AG04449 (cell line): ENCODE measurements at regions of chr6 and their contacts with region 1.

Region 1: DNA sequence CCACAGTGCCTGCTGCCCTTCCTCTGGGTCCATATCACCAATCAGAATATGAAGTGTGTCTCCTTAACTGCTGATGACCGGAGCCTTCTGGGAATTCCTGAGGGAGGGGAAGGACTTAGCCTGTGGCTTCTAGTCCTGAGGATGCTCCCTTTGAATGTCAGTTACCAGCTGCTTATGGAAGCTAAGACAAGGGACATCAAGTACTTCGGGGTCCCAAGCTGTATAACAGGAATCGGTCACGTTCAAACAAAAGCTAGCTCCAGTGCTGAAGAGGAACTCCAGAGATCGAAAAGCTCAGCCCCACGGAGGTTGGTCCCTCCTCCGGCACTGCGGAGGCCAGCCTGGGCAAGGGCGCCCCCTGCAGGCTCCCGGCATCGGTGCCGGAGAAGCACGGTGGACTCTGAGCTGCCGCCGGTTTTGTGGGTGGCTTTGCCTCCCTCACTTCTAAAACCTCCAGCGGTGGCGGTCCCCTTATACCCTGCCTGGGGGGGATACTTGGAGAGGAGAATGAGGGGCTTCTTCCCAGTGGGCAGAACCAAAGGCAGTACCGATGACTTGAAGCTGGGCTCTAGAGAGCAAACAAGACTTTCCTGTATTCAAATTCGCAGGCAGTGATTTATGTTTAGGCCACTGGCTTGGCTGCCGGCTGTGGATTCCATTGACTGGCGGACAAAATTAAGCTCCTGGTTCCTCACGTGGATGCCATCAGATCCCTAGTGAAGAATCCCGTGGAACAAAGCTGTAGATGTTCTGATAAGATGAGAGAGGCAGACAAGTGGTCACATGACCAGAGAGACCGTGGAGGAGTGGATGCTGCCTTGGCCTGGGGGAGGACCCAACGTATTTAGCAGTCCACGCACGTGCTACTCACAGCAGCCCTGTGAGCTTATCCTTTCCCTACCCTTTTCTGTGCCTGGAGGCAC is 16.2 kb upstream of the UBR2 start:
- DNase-seq: no peak
- H3K4me3 ChIP-seq: peak overlapping the region; percentile 55
- CTCF ChIP-seq: peak; percentile 100

Region 2: DNA sequence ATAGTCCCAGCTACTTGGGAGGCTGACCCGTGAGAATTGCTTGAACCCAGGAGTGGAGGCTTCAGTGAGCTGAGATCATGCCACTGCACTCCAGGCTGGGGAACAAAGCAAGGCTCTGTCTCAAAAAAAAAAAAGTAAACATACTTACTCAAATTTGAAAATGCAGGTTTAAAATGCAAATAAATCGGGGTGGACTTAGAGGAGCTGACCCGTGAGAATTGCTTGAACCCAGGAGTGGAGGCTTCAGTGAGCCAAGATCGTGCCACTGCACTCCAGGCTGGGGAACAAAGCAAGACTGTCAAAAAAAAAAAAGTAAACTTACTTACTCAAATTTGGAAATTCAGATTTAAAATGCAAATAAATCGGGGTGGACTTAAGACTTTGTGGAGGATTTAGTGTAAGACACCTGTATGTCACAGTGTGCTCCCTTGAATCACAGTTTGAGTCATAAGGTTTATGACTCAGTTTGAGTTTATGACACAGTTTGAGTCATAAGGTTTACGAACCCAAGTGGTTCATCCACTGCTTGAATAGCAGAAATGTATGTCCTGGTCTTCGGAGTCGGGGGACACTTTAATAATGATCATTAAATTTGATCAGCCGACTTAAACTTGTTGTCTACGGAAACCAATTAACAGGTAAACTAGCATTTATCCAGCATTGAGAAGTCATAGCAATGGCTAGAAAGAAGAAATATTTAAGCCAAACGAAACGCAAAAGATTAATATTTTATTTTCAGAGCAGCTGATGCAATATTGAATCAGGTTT is 323.3 kb before region 1 on chr6:
- CTCF ChIA-PET with region 1: interaction called, 35 read pairs
- POLR2A ChIA-PET with region 1: no interaction called
- DNase-seq: no peak
- H3K4me3 ChIP-seq: no peak overlapping the region
- CTCF ChIP-seq: no peak

Region 3: GRCh38 chr6:42269553-42269952 is 278.1 kb before region 1 on chr6:
- CTCF ChIA-PET with region 1: interaction called, 115 read pairs
- POLR2A ChIA-PET with region 1: no interaction called
- DNase-seq: no peak
- H3K4me3 ChIP-seq: no peak overlapping the region
- CTCF ChIP-seq: no peak

Region 4: GRCh38 chr6:42338663-42339218 is 208.9 kb before region 1 on chr6:
- CTCF ChIA-PET with region 1: interaction called, 30 read pairs
- POLR2A ChIA-PET with region 1: interaction called, 6 read pairs
- DNase-seq: peak; percentile 98
- H3K4me3 ChIP-seq: peak overlapping the region; percentile 23
- CTCF ChIP-seq: no peak

Region 5: DNA sequence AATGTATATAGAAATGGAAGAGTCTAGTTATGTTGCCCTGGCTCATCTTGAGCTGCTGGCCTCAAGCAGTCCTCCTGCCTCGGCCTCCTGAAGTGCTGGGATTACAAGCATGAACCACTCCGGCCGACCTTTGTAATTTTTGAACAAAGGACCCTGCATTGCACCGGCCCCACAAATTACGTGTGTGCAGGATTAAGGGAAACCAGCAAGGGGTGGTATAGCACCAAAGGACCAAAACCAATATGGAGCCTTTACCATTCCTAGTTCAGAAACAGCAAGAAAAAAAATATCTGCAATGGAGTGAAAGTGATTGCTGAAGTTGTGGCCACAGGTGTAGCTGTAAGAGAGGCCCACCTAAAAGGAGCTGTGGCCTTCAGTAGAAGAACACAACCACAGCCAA is 87.8 kb before region 1 on chr6:
- CTCF ChIA-PET with region 1: interaction called, 11 read pairs
- POLR2A ChIA-PET with region 1: no interaction called
- DNase-seq: no peak
- H3K4me3 ChIP-seq: no peak overlapping the region
- CTCF ChIP-seq: no peak

Region 6: DNA sequence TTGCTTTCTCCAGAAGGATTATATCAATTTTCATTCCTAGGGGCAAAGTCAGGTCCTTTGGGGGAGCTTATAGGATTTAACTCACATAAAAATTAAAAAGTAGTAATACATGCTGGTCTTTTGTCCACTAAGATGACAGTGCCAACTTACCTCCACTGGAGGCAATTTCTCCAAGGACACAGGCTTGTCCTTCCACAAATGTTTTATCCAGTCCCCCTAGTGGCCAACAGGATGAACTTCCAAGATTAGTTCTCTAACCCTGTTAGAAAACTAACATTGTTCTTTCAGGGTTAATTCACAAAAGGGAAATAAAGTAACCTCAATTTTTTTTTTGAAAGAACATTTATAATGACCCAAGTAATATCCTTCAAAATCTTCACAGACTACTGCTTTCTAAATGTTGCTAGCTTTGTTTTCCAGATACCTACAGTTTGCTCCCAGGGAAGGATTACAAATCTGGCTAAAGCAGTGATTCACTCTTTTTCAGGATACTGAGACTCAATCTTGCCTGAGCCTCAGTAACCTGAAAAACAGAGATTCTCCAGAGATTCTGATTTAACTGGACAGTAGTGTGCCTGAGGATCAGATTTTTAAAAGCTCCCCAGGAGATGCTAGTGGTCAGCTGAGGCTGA is 15.5 kb before region 1 on chr6:
- CTCF ChIA-PET with region 1: interaction called, 108 read pairs
- POLR2A ChIA-PET with region 1: no interaction called
- DNase-seq: no peak
- H3K4me3 ChIP-seq: no peak overlapping the region
- CTCF ChIP-seq: peak; percentile 70

Region 7: GRCh38 chr6:42928986-42929820 is 381.5 kb after region 1 on chr6 and contains the start of gene CNPY3:
- CTCF ChIA-PET with region 1: no interaction called
- POLR2A ChIA-PET with region 1: no interaction called
- DNase-seq: peak; percentile 85
- H3K4me3 ChIP-seq: peak within 1 kb of the TSS; percentile 71
- CTCF ChIP-seq: no peak